ENCODE measurements at regions of chr14 and their contacts with region 1.

Region 1: GRCh38 chr14:51780006-51780692 is 80.3 kb upstream of the GNG2 start:
- DNase-seq: peak; percentile 49
- ATAC-seq: peak; percentile 84
- H3K4me3 ChIP-seq: peak overlapping the region in 1 of 2 experiments; percentile 16; a peak in 1 of 4 replicates
- H3K27ac ChIP-seq: no peak overlapping the region
- H3K4me1 ChIP-seq: peaks cover 0 to 10% of the 10 kb centered on the region in 2 experiments; a peak in 3 of 4 replicates
- H3K27me3 ChIP-seq: peaks cover 8% of the 10 kb centered on the region; the same call in 1 of the 2 replicates
- CTCF ChIP-seq: peak; percentile 72 to 90 (median 79)
- POLR2A ChIP-seq: no peak
- RAD21 ChIP-seq: peak; percentile 86

Region 2: GRCh38 chr14:51157012-51157411 is 623.1 kb before region 1 on chr14:
- CTCF ChIA-PET with region 1: interaction called, 4 read pairs
- POLR2A ChIA-PET with region 1: no interaction called
- RAD21 ChIA-PET with region 1: no interaction called
- intact Hi-C with region 1: loop called (anchors 5 kb)
- DNase-seq: peak; percentile 16
- ATAC-seq: peak; percentile 87
- H3K4me3 ChIP-seq: no peak overlapping the region
- H3K27ac ChIP-seq: no peak overlapping the region
- H3K4me1 ChIP-seq: no peaks in the 10 kb centered on the region
- H3K27me3 ChIP-seq: no peaks in the 10 kb centered on the region
- CTCF ChIP-seq: peak; percentile 18 to 63 (median 54); a peak in 4 of 6 replicates
- POLR2A ChIP-seq: no peak
- RAD21 ChIP-seq: peak; percentile 48

Region 3: GRCh38 chr14:51369814-51370213 is 410.3 kb before region 1 on chr14:
- CTCF ChIA-PET with region 1: interaction called, 14 read pairs
- POLR2A ChIA-PET with region 1: no interaction called
- RAD21 ChIA-PET with region 1: interaction called in 1 of 2 experiments, 3 read pairs
- intact Hi-C with region 1: loop called (anchors 1 kb)
- DNase-seq: peak; percentile 18
- ATAC-seq: peak; percentile 79
- H3K4me3 ChIP-seq: no peak overlapping the region
- H3K27ac ChIP-seq: no peak overlapping the region
- H3K4me1 ChIP-seq: no peaks in the 10 kb centered on the region
- H3K27me3 ChIP-seq: no peaks in the 10 kb centered on the region
- CTCF ChIP-seq: peak; percentile 65 to 72 (median 70)
- POLR2A ChIP-seq: no peak
- RAD21 ChIP-seq: peak; percentile 78

Region 4: DNA sequence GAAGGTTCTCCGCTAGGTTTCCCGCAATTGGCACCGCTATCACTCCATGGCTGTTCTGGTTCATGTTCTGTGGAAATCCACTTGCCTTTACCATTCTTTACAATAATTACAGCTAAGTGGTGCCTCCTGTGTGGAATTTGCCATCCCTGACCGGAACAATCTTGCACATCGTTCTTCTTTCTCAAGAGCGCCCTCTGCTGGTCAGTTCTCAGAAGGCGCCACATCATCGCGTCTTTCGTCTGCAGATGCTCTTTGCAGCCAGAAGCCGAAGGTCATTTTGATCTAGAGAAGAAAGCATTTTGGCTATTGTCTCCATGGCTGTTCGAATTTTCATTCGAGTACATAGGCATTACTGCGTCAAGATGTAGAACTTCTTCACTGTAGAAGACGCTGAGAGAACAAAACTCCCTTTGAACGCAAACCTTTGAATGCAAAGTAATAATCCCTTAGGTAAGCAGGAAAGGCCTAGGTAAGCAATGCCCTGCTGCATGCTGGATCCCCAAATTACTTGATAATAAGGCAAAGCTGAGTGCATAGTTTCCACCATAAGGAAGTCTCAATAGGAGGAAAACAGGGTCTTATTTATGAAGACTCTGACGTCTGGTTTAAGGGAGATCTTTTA is 199.1 kb after region 1 on chr14:
- CTCF ChIA-PET with region 1: interaction called, 7 read pairs
- POLR2A ChIA-PET with region 1: no interaction called
- RAD21 ChIA-PET with region 1: no interaction called
- intact Hi-C with region 1: loop called (anchors 10 kb)
- DNase-seq: peak; percentile 72
- ATAC-seq: peak; percentile 98
- H3K4me3 ChIP-seq: no peak overlapping the region
- H3K27ac ChIP-seq: no peak overlapping the region
- H3K4me1 ChIP-seq: peaks cover 0 to 6% of the 10 kb centered on the region in 2 experiments; a peak in 1 of 4 replicates
- H3K27me3 ChIP-seq: no peaks in the 10 kb centered on the region
- CTCF ChIP-seq: peak; percentile 73 to 95 (median 87)
- POLR2A ChIP-seq: no peak
- RAD21 ChIP-seq: peak; percentile 78